MCF 10A (cell line): ENCODE measurements at regions of chr16 and their contacts with region 1.

Region 1: DNA sequence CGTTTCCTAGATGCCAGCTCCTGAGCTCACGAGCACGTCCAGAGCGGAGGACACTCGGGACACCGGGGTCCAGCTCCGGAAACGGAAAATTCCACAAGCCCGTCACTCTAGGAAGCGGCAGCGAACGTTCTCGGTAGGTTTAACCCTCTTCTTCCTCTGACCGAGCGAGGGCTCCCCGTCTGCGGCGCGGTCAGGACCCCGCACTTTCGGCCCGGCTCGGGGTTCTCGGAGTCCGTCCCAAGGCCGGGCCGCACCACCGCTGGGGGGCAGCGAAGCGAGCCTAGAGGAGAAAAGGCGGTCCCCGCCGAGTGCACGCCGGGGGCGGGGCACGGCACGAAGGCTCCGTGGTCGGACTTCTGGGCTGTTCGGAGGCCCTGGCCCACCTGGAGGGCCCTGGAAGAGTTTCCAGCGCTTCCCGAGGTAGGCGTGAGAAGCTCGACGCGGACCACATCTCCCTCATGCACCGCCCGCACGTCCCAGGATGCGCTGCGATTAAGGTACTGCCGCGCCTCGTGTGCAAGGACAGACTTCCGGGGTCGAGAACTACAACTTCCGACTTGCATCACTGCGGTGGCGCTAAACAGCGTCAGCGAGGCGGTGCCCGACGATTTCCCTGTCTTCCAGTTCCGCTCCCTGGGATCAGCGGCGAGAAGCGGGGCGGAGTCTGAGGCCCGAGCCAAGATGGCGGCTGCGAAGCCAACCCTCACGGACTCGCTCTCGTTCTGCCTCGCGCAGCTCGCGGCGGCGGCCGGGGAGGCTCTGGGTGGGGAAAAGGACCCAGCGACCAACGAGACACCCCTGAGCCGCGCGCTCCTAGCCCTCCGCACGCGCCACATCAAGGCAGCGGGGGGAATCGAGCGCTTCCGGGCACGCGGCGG is at the start of gene ARMC5:
- DNase-seq: peak; percentile 97
- H3K4me3 Mint-ChIP-seq: peak within 1 kb of the TSS; percentile 88
- H3K27ac Mint-ChIP-seq: peak within 1 kb of the TSS; percentile 97
- H3K4me1 Mint-ChIP-seq: peaks cover 14% of the 10 kb centered on the region
- H3K27me3 Mint-ChIP-seq: no peaks in the 10 kb centered on the region
- CTCF ChIP-seq: peak; percentile 38
- total RNA-seq, gene ARMC5: 8.1 and 10.1 TPM in 2 replicates

Region 2: DNA sequence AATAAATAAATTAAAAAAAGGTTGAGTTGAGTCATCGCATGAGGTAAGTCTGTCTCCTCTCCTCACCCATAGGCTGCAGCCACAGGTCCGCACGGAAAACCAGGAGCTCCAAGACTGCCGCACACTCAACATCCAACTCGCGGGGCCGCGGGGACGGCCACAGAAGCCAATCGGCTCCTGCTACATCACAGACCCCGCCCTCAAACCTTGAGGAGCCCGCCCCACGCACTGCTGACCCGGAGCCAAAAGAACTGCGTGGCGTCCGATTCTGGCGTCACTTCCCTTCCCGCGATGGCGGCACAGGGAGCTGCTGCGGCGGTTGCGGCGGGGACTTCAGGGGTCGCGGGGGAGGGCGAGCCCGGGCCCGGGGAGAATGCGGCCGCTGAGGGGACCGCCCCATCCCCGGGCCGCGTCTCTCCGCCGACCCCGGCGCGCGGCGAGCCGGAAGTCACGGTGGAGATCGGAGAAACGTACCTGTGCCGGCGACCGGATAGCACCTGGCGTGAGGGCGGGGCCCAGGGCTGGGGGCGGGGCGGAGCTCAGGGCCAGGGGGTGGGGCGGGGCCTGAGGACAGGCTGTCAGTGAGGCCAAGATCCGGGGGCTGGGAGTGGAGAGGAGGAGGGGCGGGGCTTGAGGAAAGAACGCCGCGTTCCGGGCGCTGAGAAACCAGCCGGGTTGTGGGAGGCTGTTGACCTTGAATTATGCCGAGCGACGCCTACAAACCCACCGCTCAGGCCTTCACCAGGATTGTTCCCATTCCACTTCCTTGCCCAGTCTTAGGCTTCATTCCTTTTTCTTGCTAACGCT is 341.5 kb before region 1 on chr16 and contains the start of gene KAT8:
- CTCF ChIA-PET with region 1: interaction called, 4 read pairs
- POLR2A ChIA-PET with region 1: interaction called, 36 read pairs
- intact Hi-C with region 1: no loop called
- DNase-seq: peak; percentile 99
- H3K4me3 Mint-ChIP-seq: peak within 1 kb of the TSS; percentile 74
- H3K27ac Mint-ChIP-seq: peak within 1 kb of the TSS; percentile 94
- H3K4me1 Mint-ChIP-seq: peaks cover 16% of the 10 kb centered on the region
- H3K27me3 Mint-ChIP-seq: no peaks in the 10 kb centered on the region
- CTCF ChIP-seq: no peak
- total RNA-seq, gene KAT8: 42.0 and 45.8 TPM in 2 replicates

Region 3: GRCh38 chr16:31179747-31180459 is 279.2 kb before region 1 on chr16 and contains the start of gene FUS:
- CTCF ChIA-PET with region 1: interaction called, 4 read pairs
- POLR2A ChIA-PET with region 1: interaction called, 33 read pairs
- intact Hi-C with region 1: loop called (anchors 2 kb)
- DNase-seq: peak; percentile 82
- H3K4me3 Mint-ChIP-seq: peak within 1 kb of the TSS; percentile 95
- H3K27ac Mint-ChIP-seq: peak within 1 kb of the TSS; percentile 99
- H3K4me1 Mint-ChIP-seq: peaks cover 26% of the 10 kb centered on the region
- H3K27me3 Mint-ChIP-seq: no peaks in the 10 kb centered on the region
- CTCF ChIP-seq: no peak
- total RNA-seq, gene FUS: 451 and 481 TPM in 2 replicates

Region 4: GRCh38 chr16:31472709-31473203 is 13.7 kb after region 1 on chr16:
- CTCF ChIA-PET with region 1: interaction called, 14 read pairs
- POLR2A ChIA-PET with region 1: interaction called, 5 read pairs
- intact Hi-C with region 1: no loop called
- DNase-seq: peak; percentile 88
- H3K4me3 Mint-ChIP-seq: peak overlapping the region; percentile 91
- H3K27ac Mint-ChIP-seq: peak overlapping the region; percentile 89
- H3K4me1 Mint-ChIP-seq: peaks cover 22% of the 10 kb centered on the region
- H3K27me3 Mint-ChIP-seq: no peaks in the 10 kb centered on the region
- CTCF ChIP-seq: peak; percentile 56

Region 5: DNA sequence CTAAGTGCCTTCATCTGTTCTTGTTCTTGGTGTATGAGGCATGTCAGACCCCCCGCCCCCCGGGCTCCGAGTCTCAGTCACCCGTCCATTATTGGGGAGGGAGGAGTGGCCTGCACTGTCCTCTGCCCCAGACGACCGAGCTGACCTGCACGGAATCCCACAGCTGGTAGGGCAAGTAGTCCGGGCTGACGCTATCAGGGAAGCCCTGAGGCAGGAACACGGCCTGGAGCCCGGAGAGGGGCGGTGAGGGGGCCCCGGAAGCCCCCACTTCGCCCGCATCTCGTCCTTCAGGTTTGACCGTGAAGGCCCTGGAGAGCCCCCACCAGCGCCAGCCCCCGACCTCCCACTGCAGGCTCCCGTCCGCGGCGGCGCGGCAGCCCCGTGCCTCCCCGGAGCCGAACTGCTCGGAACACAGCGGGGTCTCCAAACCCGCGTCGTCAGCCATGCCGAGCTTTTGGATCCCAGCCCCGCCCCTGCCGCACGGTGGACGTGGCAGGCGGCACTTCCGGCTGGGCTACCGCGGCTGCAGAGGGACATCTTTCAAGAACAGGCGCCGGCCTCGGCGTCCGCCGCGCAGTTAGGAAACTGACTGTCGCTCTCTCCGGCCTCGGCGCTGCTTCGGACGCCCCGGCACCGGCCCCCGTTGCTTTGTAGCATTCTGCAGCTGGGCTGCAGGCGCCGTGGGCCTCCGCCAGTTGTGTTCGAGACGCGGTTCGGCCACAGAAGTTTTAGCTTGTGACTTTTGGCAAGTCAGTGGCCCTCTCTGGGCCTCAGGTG is 49.0 kb after region 1 on chr16 and contains the start of gene RUSF1:
- CTCF ChIA-PET with region 1: interaction called, 12 read pairs
- POLR2A ChIA-PET with region 1: interaction called, 40 read pairs
- intact Hi-C with region 1: no loop called
- DNase-seq: peak; percentile 84
- H3K4me3 Mint-ChIP-seq: peak within 1 kb of the TSS; percentile 88
- H3K27ac Mint-ChIP-seq: peak within 1 kb of the TSS; percentile 98
- H3K4me1 Mint-ChIP-seq: peaks cover 22% of the 10 kb centered on the region
- H3K27me3 Mint-ChIP-seq: no peaks in the 10 kb centered on the region
- CTCF ChIP-seq: no peak
- total RNA-seq, gene RUSF1: 72.0 and 88.8 TPM in 2 replicates

Region 6: DNA sequence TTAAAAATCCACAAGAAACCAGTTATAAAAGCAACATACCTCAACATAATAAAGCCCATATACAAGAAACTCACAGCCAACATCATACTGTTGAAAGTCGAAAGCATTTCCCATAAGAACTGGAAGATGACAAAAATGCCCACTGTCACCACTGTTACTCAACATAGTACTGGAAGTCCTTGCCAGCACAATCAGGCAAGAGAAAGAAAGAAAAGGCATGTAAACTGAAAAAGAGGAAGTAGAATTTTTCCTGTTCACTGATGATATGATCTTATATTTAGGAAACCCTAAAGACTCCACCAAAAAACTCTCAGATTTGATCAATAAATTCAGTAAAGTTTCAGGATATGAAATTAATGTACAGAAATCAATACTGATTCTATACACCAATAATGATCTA is 113.7 kb after region 1 on chr16:
- CTCF ChIA-PET with region 1: no interaction called
- POLR2A ChIA-PET with region 1: no interaction called
- intact Hi-C with region 1: no loop called
- DNase-seq: no peak
- H3K4me3 Mint-ChIP-seq: no peak overlapping the region
- H3K27ac Mint-ChIP-seq: no peak overlapping the region
- H3K4me1 Mint-ChIP-seq: no peaks in the 10 kb centered on the region
- H3K27me3 Mint-ChIP-seq: no peaks in the 10 kb centered on the region
- CTCF ChIP-seq: no peak

Region 7: DNA sequence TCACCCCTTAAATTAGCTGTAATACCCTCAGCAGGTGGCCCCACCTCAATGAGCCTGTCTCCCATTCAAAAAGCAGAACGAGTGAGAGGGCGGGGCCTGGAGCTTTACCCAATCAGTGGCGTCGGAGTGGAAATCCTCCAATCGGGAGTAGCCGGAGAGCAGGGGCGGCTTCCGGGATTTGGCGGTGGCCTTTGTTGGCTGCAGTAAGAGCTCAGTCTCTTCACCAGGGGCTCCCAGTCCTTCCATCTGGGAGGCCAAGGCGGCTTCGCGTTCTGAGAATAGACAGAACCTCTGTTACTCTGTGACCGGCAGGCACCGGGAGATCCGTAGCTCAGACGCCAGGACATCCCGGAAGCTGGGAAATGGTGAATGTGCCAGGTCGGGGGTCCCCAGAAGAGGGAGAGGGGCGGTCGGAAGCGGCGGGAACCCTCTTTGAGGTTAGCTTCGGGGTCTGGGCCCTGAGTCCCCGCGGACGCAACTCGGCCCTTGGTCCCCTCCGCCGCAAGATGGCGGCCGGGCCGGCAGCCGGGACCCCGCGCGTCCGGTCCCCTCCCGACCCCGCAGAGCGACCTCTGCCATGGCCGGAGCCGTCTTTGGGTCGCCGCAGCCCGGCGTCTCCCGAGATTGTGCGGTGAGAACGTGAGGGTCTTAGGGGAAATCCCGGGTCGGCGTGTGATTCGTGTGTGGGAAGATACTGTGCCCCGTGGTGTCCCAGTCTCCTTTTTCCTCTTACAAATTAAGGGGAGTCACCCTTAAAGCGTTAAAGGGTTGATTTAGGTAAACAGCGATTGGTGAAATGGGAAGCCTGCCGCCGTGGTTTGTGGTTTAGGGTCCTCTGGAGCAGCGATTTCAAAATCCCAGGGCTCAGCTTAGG is 254.2 kb after region 1 on chr16:
- CTCF ChIA-PET with region 1: interaction called, 9 read pairs
- POLR2A ChIA-PET with region 1: interaction called, 10 read pairs
- intact Hi-C with region 1: loop called (anchors 5 kb)
- DNase-seq: peak; percentile 95
- H3K4me3 Mint-ChIP-seq: peak overlapping the region; percentile 96
- H3K27ac Mint-ChIP-seq: peak overlapping the region; percentile 99
- H3K4me1 Mint-ChIP-seq: peaks cover 17% of the 10 kb centered on the region
- H3K27me3 Mint-ChIP-seq: no peaks in the 10 kb centered on the region
- CTCF ChIP-seq: no peak

Region 8: GRCh38 chr16:31873556-31874365 is 414.7 kb after region 1 on chr16 and contains the start of gene ZNF267:
- CTCF ChIA-PET with region 1: interaction called, 8 read pairs
- POLR2A ChIA-PET with region 1: interaction called, 13 read pairs
- intact Hi-C with region 1: loop called (anchors 2 kb)
- DNase-seq: peak; percentile 96
- H3K4me3 Mint-ChIP-seq: peak within 1 kb of the TSS; percentile 91
- H3K27ac Mint-ChIP-seq: peak within 1 kb of the TSS; percentile 94
- H3K4me1 Mint-ChIP-seq: peaks cover 41% of the 10 kb centered on the region
- H3K27me3 Mint-ChIP-seq: no peaks in the 10 kb centered on the region
- CTCF ChIP-seq: no peak
- total RNA-seq, gene ZNF267: 10.1 and 10.6 TPM in 2 replicates